ENCODE measurements at regions of chr17 and their contacts with region 1.

Region 1: GRCh38 chr17:68247445-68248198 is at the start of gene AMZ2:
- DNase-seq: peak; percentile 97
- H3K4me3 Mint-ChIP-seq: peak within 1 kb of the TSS; percentile 90
- H3K27ac Mint-ChIP-seq: peak within 1 kb of the TSS; percentile 99
- H3K4me1 Mint-ChIP-seq: peaks cover 48% of the 10 kb centered on the region
- H3K27me3 Mint-ChIP-seq: no peaks in the 10 kb centered on the region
- total RNA-seq, gene AMZ2: 134 to 146 TPM

Region 2: DNA sequence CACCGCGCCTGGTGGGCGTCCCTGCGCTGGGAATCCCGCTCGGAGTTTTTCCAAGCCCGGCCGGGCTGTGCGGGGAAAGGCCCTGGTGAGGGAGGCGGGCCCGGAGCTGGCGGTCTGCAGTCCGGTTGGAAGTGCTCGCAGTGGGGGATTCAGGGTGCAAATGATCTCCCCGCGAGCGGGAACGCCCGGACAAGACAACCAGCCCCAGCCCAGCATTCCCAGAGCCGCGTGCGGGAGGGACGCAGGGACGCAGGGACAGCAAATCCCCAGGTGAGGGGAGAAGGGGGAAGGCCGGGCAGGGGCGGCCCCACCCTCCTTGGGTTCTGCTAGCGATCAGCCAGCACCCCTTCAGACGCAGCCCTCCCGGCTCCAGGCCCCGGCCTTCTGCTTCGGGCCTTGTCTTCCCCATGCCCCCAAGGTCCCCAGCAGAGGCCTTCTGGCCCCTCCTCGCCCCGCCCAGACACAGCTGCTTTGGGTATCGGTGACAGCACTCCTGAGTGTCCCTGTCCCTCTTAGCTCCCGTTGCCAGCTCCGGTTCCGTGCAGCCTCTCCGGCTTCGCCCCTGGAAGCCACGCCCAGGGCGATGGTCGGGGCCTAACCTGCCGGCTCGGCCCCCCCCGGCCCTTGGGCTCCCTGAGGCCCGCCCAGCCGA is 50.6 kb before region 1 on chr17:
- CTCF ChIA-PET with region 1: interaction called, 6 read pairs
- POLR2A ChIA-PET with region 1: interaction called, 12 read pairs
- intact Hi-C with region 1: no loop called
- DNase-seq: peak; percentile 66
- H3K4me3 Mint-ChIP-seq: peak overlapping the region; percentile 70
- H3K27ac Mint-ChIP-seq: no peak overlapping the region
- H3K4me1 Mint-ChIP-seq: peaks cover 35% of the 10 kb centered on the region
- H3K27me3 Mint-ChIP-seq: peaks cover 13% of the 10 kb centered on the region

Region 3: GRCh38 chr17:68205251-68205807 is 42.3 kb before region 1 on chr17:
- CTCF ChIA-PET with region 1: interaction called, 18 read pairs
- POLR2A ChIA-PET with region 1: interaction called, 21 read pairs
- intact Hi-C with region 1: loop called (anchors 1 kb)
- DNase-seq: peak; percentile 93
- H3K4me3 Mint-ChIP-seq: peak overlapping the region; percentile 81
- H3K27ac Mint-ChIP-seq: peak overlapping the region; percentile 89
- H3K4me1 Mint-ChIP-seq: peaks cover 32% of the 10 kb centered on the region
- H3K27me3 Mint-ChIP-seq: no peaks in the 10 kb centered on the region

Region 4: GRCh38 chr17:68277807-68278206 is 30.2 kb after region 1 on chr17:
- CTCF ChIA-PET with region 1: no interaction called
- POLR2A ChIA-PET with region 1: no interaction called
- intact Hi-C with region 1: no loop called
- DNase-seq: no peak
- H3K4me3 Mint-ChIP-seq: no peak overlapping the region
- H3K27ac Mint-ChIP-seq: no peak overlapping the region
- H3K4me1 Mint-ChIP-seq: peaks cover 10% of the 10 kb centered on the region
- H3K27me3 Mint-ChIP-seq: no peaks in the 10 kb centered on the region

Region 5: GRCh38 chr17:68291844-68292695 is 44.4 kb after region 1 on chr17:
- CTCF ChIA-PET with region 1: no interaction called
- POLR2A ChIA-PET with region 1: interaction called, 23 read pairs
- intact Hi-C with region 1: loop called (anchors 1 kb)
- DNase-seq: peak; percentile 91
- H3K4me3 Mint-ChIP-seq: peak overlapping the region; percentile 82
- H3K27ac Mint-ChIP-seq: peak overlapping the region; percentile 88
- H3K4me1 Mint-ChIP-seq: peaks cover 63% of the 10 kb centered on the region
- H3K27me3 Mint-ChIP-seq: no peaks in the 10 kb centered on the region

Region 6: DNA sequence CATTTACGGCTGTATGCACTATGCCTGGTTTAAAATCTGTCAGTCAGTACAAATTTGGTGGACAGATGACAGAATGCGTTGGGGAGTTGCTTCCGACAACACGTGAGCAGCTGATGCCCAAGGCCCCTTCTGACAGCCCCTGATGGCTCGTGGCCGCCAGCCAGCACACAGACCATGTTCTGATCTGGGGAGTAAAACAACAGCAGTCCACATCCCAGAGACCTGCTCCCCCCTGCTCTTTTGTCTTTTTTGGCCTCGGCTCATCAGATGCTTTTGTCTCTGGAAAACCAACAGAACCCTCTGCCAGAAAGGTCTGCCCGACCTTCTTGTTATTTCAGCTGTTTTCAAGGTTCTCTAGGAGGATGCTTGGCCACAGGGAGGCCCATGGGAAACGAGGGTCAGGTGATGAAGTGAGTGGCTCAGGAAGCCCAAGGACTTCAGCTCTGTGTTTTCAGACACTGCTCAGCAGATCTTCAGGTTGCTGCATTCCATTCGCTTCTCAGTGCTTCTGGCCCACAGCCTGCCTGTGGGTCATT is 54.5 kb after region 1 on chr17:
- CTCF ChIA-PET with region 1: no interaction called
- POLR2A ChIA-PET with region 1: no interaction called
- intact Hi-C with region 1: no loop called
- DNase-seq: no peak
- H3K4me3 Mint-ChIP-seq: no peak overlapping the region
- H3K27ac Mint-ChIP-seq: no peak overlapping the region
- H3K4me1 Mint-ChIP-seq: peaks cover 17% of the 10 kb centered on the region
- H3K27me3 Mint-ChIP-seq: no peaks in the 10 kb centered on the region

Region 7: DNA sequence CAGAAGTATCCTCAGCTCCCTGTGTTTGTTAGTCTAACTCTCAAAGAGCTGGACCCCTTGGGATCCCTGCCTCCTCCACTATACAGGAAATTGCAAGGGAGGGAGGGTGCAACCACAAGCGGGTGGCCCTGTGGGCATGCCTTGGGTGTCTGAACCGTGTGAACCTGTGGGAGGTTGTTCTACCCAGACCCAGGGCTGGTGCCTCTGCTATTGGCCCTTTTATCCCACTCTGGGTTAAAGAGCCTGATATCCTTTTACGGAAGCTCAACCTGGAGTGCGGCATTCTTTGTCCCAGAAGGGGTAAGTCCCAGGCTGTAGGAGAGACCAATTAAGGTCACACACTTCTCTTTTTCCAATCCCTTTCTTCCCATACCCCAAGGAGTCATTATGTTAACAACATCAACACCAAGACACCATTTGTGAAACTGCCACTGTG is 97.1 kb after region 1 on chr17:
- CTCF ChIA-PET with region 1: no interaction called
- POLR2A ChIA-PET with region 1: no interaction called
- intact Hi-C with region 1: no loop called
- DNase-seq: peak; percentile 58
- H3K4me3 Mint-ChIP-seq: no peak overlapping the region
- H3K27ac Mint-ChIP-seq: peak overlapping the region; percentile 74
- H3K4me1 Mint-ChIP-seq: peaks cover 59% of the 10 kb centered on the region
- H3K27me3 Mint-ChIP-seq: no peaks in the 10 kb centered on the region

Region 8: DNA sequence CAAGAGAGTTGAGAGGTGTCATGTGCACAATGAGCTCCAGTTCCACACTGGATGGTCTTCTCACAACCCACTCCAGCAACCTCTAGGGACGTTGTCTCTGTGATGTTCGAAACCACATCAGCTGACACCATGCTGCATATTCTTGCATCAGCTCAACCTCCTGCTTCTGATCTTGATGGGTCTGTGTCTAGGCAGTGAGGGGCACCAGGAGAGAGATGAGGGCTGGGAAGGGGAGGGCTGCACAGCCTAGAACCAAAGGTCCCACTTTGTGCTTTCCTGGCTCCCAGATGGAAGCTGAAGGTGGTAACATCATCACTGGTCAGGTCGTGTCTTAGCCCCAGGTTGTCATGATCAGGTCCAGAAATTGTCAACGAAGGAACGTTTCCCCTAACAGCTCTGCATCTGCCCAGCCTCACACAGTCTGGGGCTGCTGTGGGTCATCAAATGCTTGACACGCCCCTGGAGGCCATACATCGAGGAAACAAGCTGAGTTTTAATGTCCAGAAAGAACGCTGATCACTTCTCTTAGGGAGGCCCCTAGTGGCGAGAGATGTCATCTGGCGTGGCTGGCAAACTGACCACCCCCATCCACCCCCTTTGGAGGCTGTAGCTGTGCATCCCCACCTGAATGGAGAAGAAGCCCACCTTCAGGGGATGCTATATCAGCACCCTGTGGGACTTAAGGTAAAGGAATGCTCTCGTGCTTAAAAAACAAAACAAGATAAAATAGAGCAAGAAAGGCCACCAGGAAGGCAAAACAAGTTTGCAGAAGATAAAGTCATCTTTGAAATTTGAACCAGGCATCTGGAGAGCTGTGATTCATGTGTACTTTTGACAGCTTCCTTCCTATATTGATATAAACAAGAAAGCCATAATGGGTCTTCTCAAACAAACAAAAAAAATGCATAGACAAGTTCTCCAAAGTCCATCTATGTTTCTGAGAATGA is 151.3 kb after region 1 on chr17:
- CTCF ChIA-PET with region 1: interaction called, 14 read pairs
- POLR2A ChIA-PET with region 1: interaction called, 4 read pairs
- intact Hi-C with region 1: no loop called
- DNase-seq: peak; percentile 55
- H3K4me3 Mint-ChIP-seq: peak overlapping the region; percentile 45
- H3K27ac Mint-ChIP-seq: peak overlapping the region; percentile 87
- H3K4me1 Mint-ChIP-seq: peaks cover 37% of the 10 kb centered on the region
- H3K27me3 Mint-ChIP-seq: no peaks in the 10 kb centered on the region

Region 9: GRCh38 chr17:68512247-68512982 is 264.8 kb after region 1 on chr17 and contains the start of gene PRKAR1A:
- CTCF ChIA-PET with region 1: interaction called, 3 read pairs
- POLR2A ChIA-PET with region 1: no interaction called
- intact Hi-C with region 1: loop called (anchors 5 kb)
- DNase-seq: peak; percentile 95
- H3K4me3 Mint-ChIP-seq: peak within 1 kb of the TSS; percentile 98
- H3K27ac Mint-ChIP-seq: peak within 1 kb of the TSS; percentile 98
- H3K4me1 Mint-ChIP-seq: peaks cover 46% of the 10 kb centered on the region
- H3K27me3 Mint-ChIP-seq: no peaks in the 10 kb centered on the region
- total RNA-seq, gene PRKAR1A: 221 to 229 TPM